ENCODE measurements at regions of chr3 and their contacts with region 1.

Region 1: DNA sequence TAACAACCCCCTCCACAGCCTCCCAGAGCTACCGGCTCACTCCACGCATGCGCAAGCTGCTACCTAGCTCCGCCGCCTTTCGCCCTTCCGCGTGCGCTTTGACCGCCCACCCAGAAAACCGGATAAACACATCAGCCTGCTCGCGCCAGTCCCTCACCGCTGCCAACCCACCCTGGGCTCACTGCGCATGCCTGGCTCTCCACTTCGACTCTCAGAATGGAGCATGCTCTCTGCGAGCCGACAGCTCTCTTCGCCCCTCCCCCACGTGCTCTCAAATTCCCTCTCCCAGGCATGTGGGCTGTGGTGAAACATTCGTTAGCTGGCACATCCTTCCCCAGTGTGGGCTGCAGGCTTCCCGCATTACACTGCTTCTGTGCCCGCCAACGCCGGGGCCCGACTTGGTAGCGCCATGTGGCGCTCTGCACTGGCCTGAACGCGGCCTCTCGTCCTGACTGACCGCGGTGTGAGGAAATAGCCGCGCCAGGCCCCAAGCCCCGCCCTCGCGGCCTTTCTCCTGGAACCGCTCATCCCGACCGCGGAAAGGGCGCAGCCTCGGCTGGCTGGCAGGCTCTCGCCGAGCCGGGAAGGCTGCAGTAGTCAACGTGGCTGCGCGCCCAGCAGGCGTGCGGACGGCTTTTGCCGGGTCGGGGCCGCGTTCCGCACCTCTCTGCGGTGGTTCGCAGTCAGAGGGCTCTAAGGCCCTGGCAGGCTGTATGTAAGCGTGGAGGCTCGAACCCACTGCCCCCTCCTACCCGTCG is 445 bp upstream of the MSL2 start:
- DNase-seq: peak; percentile 99
- ATAC-seq: peak; percentile 88 to 96 (median 92)
- H3K4me3 ChIP-seq: peak overlapping the region; percentile 71 to 98 (median 86)
- H3K27ac ChIP-seq: peak overlapping the region; percentile 95 to 100 (median 100)
- H3K4me1 ChIP-seq: peaks cover 3 to 38% (median 25%) of the 10 kb centered on the region in 12 donors
- H3K27me3 ChIP-seq: no peaks in the 10 kb centered on the region
- CTCF ChIP-seq: peak in 1 of 12 donors; percentile 5
- POLR2A ChIP-seq: peak in 1 of 2 donors; percentile 74

Region 2: DNA sequence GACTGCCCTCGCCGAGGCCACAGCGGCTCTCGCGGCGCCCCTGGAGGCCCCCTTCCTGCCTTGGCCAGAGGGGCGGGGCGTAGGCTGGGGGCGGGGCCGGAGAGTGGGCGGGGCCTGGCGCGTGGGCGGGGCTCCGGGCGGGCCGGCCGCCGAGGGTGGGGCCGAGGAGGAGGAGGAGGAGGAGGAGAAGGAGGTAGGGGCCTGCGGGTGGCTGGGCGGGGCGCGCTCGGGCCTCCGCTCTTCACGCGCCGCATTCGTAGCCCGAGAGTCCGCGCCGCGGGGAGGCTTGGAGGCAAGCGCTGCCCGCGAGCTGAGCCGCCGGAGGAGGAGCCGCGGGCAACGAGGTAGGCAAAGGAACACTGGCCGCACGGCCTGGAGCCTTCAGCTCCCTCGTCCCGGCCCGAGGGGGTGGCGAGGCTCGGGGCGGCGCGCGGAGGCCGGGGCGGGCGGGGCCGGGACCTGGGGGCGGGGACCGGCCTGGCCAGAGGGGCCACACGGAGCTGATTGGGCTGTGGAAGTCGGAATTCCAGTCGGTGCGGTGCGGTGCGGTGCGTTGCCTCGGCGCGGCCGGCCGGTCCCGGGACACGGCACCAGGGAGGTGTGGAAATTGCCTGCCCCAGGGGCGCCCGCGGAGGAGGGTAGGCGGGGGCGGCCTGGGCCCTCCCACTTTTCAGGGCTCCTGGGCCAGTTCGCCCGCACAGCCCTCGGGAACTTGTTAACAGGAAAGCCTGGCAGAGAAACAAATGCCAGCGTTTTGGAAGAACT is 230.9 kb before region 1 on chr3 and contains the start of gene PPP2R3A:
- intact Hi-C with region 1: loop called in 2 of 10 experiments (anchors 5 to 10 kb)
- DNase-seq: peak; percentile 87 to 92 (median 88)
- ATAC-seq: peak; percentile 89 to 98 (median 94)
- H3K4me3 ChIP-seq: peak within 1 kb of the TSS; percentile 60 to 96 (median 79)
- H3K27ac ChIP-seq: peak within 1 kb of the TSS; percentile 72 to 98 (median 90)
- H3K4me1 ChIP-seq: peaks cover 0 to 40% (median 11%) of the 10 kb centered on the region in 12 donors
- H3K27me3 ChIP-seq: no peaks in the 10 kb centered on the region
- CTCF ChIP-seq: no peak
- POLR2A ChIP-seq: peak in 1 of 2 donors; percentile 46
- total RNA-seq, gene PPP2R3A: 46.8 to 136 (median 95.5) TPM

Region 3: GRCh38 chr3:136075218-136075808 is 121.3 kb before region 1 on chr3:
- intact Hi-C with region 1: loop called in 5 of 10 experiments (anchors 2 to 5 kb)
- DNase-seq: peak; percentile 54 to 68 (median 67)
- ATAC-seq: peak; percentile 78 to 84 (median 80)
- H3K4me3 ChIP-seq: no peak overlapping the region
- H3K27ac ChIP-seq: peak overlapping the region in 8 of 12 donors; percentile 0 to 59 (median 36)
- H3K4me1 ChIP-seq: peaks cover 0 to 33% (median 17%) of the 10 kb centered on the region in 12 donors
- H3K27me3 ChIP-seq: no peaks in the 10 kb centered on the region
- CTCF ChIP-seq: peak; percentile 78 to 97 (median 93)
- POLR2A ChIP-seq: no peak

Region 4: DNA sequence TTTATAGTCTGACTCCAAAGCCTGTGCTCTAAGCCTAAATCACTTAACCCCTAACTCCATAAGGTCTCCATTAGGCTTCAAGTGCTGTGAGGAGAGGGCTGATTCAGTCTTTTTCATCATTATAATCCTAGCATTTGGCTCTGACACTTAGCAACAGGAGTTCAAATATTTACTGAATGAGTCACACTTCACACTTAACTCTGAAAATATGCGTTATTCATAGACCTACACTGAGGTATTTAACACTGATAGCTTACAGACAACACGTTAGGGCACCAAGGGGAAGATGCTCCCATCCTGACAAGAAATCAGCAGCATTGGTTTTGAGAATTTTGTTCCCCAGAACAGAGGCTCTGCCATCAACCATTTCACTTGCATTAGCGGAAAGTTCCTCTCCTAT is 54.0 kb before region 1 on chr3:
- intact Hi-C with region 1: loop called in 4 of 10 experiments (anchors 5 to 10 kb)
- DNase-seq: no peak
- ATAC-seq: peak in 3 of 4 donors; percentile 21 to 74 (median 59)
- H3K4me3 ChIP-seq: no peak overlapping the region
- H3K27ac ChIP-seq: peak overlapping the region in 4 of 12 donors; percentile 4 to 41 (median 20)
- H3K4me1 ChIP-seq: peaks cover 0 to 25% (median 7%) of the 10 kb centered on the region in 12 donors
- H3K27me3 ChIP-seq: no peaks in the 10 kb centered on the region
- CTCF ChIP-seq: no peak
- POLR2A ChIP-seq: no peak

Region 5: DNA sequence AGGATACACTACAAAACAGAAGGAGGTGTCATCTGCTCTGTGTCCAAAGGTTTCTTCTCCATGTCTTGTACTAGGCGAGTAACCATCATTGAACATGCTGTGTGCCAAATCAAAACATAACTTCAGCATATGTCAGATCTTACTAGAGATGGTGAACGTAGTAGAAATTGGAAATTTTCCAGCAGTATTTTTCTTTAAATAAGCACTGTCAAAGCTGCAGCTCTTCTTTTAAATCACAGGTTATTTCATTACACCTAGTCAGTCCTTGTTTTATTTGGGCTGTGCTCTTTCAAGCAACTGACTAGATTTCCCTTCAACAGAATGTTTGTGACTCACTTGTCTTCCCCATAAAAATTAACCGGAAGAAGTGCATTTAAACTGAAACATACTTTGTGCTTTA is 46.9 kb before region 1 on chr3:
- intact Hi-C with region 1: loop called in 6 of 10 experiments (anchors 5 to 10 kb)
- DNase-seq: no peak
- ATAC-seq: no peak
- H3K4me3 ChIP-seq: no peak overlapping the region
- H3K27ac ChIP-seq: no peak overlapping the region
- H3K4me1 ChIP-seq: peaks cover 0 to 45% (median 17%) of the 10 kb centered on the region in 12 donors
- H3K27me3 ChIP-seq: no peaks in the 10 kb centered on the region
- CTCF ChIP-seq: no peak
- POLR2A ChIP-seq: no peak

Region 6: GRCh38 chr3:136250226-136250902 is 53.8 kb after region 1 on chr3 and contains the start of gene PCCB:
- intact Hi-C with region 1: loop called (anchors 1 to 5 kb)
- DNase-seq: peak; percentile 92 to 98 (median 96)
- ATAC-seq: peak; percentile 98 to 99 (median 98)
- H3K4me3 ChIP-seq: peak within 1 kb of the TSS; percentile 35 to 94 (median 73)
- H3K27ac ChIP-seq: peak within 1 kb of the TSS; percentile 77 to 98 (median 93)
- H3K4me1 ChIP-seq: peaks cover 0 to 21% (median 12%) of the 10 kb centered on the region in 12 donors
- H3K27me3 ChIP-seq: no peaks in the 10 kb centered on the region
- CTCF ChIP-seq: peak; percentile 74 to 92 (median 86)
- POLR2A ChIP-seq: peak in 1 of 2 donors; percentile 62
- total RNA-seq, gene PCCB: 58.5 to 154 (median 103) TPM